ENCODE measurements at regions of chr17 and their contacts with region 1.

Region 1: DNA sequence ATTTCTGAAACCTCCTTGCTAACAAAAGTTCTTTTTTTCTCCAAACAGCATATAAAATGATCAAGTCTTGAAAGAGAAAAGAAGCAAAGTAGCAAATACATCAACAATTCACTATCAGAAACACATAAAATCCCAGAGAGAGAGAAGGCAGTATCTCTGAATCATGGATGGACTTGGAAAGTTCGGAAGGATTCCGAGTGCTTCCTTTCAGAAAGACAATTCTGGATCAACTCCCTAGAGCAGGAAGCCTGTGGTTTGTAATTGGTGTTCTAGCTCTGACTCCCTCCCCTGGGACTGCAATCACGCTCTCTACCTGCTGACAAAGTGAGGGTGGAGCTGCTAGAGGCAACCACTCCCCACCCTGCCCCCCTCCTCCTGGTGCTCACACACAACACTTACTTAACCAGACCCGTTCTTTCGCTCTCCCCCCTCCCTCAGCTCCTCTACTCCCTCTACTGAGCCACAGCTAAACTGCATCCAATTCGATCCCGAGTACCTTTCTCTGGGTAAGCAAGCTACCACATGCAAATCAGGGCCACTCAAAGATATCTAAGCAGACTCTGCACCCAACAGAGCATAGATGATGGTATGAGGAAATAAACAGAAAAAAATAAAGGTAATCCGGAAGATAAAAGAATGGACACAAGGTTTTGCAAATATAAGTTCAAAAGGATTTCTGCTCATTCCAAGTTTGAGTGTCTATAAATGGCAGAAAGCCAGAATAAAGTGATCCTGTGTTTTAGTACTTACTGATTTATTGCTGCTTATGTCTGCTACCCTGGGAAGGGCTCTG is at the start of gene RNF43:
- DNase-seq: peak; percentile 93
- ATAC-seq: peak; percentile 100
- H3K4me3 Mint-ChIP-seq: peak within 1 kb of the TSS; percentile 82
- H3K27ac Mint-ChIP-seq: peak within 1 kb of the TSS; percentile 92
- H3K4me1 Mint-ChIP-seq: peaks cover 28% of the 10 kb centered on the region
- H3K27me3 Mint-ChIP-seq: peaks cover 6% of the 10 kb centered on the region
- CTCF ChIP-seq: peak; percentile 56; the same call in 1 of the 2 replicates
- total RNA-seq, gene RNF43: 3.2 to 3.6 TPM (median 3.5 TPM) in 3 replicates

Region 2: DNA sequence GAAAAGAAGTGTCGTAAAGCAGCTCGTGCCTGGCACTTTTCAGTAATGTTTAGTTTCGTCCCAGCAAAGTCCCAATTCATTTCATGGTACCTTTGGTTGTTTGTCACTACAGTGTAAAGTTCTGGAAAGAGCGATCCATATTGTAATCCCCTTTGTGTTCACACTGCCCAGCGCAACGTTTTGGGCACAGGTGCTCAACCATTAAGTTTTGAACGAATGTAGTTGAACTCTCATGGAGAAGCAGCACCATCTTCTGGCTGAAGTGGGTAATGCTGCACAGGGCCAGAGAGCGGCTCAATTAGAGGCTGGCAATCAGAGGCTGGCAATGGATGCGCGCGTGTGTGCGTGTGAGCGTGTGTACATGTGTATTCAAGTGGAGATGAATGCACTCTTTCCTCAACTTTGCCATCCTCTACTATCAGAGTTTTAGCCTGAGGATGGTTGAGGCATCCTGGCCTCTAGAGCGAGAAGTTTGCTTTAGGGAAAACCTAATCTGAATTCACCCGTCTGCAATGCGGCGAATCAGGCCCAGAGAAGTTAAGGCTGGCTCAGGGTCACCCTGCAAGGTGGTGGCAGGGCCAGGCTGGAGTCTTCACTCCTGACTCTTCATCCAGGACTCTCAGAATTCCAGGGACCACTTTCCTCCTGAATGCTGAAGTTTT is 304.4 kb before region 1 on chr17:
- CTCF ChIA-PET with region 1: no interaction called
- POLR2A ChIA-PET with region 1: no interaction called
- DNase-seq: peak; percentile 92
- ATAC-seq: peak; percentile 86
- H3K4me3 Mint-ChIP-seq: no peak overlapping the region
- H3K27ac Mint-ChIP-seq: no peak overlapping the region
- H3K4me1 Mint-ChIP-seq: no peaks in the 10 kb centered on the region
- H3K27me3 Mint-ChIP-seq: peaks cover 14% of the 10 kb centered on the region
- CTCF ChIP-seq: peak; percentile 82

Region 3: DNA sequence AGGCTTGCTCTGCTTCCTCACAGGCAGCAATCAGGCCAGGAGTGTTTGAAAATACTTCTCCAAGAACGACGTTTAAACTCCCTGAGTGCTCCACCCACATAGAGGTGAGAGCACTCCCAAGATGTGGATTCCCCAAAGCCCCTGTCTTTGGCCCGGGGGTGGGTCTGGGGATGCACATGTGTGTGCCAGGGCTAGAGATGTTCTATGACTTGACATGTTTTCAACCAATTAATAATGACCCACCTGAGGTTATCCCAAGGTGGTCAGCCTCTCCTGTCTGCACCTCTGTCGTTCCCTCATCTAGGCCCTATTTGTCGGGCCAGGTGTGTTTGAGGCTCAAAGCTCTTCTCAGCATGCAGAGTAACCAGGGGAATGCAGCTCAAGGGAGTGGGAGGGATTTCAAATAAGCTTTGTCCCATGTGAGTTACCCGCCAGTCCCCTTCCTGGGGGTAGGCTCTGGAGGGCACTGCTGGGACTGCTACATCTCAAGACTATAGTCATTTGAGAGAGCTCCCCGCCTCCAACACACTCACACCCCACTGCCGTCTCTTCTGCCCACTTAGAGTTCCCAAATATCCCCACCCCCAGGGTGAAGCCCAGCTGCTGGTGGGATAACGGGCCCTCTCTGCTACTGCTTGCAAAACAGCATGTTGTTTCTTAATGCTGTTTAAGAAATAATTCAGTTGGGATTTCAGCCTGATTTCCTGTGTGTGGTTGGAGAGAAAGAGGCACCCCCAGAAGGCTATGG is 133.0 kb before region 1 on chr17:
- CTCF ChIA-PET with region 1: interaction called, 11 read pairs
- POLR2A ChIA-PET with region 1: interaction called, 5 read pairs
- DNase-seq: peak; percentile 51
- ATAC-seq: peak; percentile 97
- H3K4me3 Mint-ChIP-seq: no peak overlapping the region
- H3K27ac Mint-ChIP-seq: 0 out of 2 replicates have a peak overlapping the region, but pooled peaks have one; percentile 17
- H3K4me1 Mint-ChIP-seq: peaks cover 20% of the 10 kb centered on the region
- H3K27me3 Mint-ChIP-seq: peaks cover 4% of the 10 kb centered on the region
- CTCF ChIP-seq: no peak

Region 4: GRCh38 chr17:58329035-58329809 is 88.3 kb before region 1 on chr17:
- CTCF ChIA-PET with region 1: interaction called, 18 read pairs
- POLR2A ChIA-PET with region 1: interaction called, 8 read pairs
- DNase-seq: peak; percentile 61
- ATAC-seq: peak; percentile 48
- H3K4me3 Mint-ChIP-seq: peak overlapping the region; percentile 41
- H3K27ac Mint-ChIP-seq: peak overlapping the region; percentile 44
- H3K4me1 Mint-ChIP-seq: peaks cover 57% of the 10 kb centered on the region
- H3K27me3 Mint-ChIP-seq: peaks cover 11% of the 10 kb centered on the region
- CTCF ChIP-seq: 0 out of 2 replicates have a peak, but pooled peaks have one; percentile 16

Region 5: GRCh38 chr17:58352014-58352842 is 65.3 kb before region 1 on chr17 and contains the start of gene SUPT4H1:
- CTCF ChIA-PET with region 1: interaction called, 52 read pairs
- POLR2A ChIA-PET with region 1: interaction called, 29 read pairs
- DNase-seq: peak; percentile 89
- ATAC-seq: peak; percentile 88
- H3K4me3 Mint-ChIP-seq: peak within 1 kb of the TSS; percentile 100
- H3K27ac Mint-ChIP-seq: peak within 1 kb of the TSS; percentile 99
- H3K4me1 Mint-ChIP-seq: peaks cover 19% of the 10 kb centered on the region
- H3K27me3 Mint-ChIP-seq: no peaks in the 10 kb centered on the region; the same call in 1 of the 2 replicates
- CTCF ChIP-seq: no peak
- total RNA-seq, gene SUPT4H1: 85.5 to 91.1 TPM (median 89.3 TPM) in 3 replicates

Region 6: GRCh38 chr17:58369214-58370031 is 48.1 kb before region 1 on chr17:
- CTCF ChIA-PET with region 1: interaction called, 10 read pairs
- POLR2A ChIA-PET with region 1: no interaction called
- DNase-seq: no peak
- ATAC-seq: no peak
- H3K4me3 Mint-ChIP-seq: no peak overlapping the region
- H3K27ac Mint-ChIP-seq: no peak overlapping the region
- H3K4me1 Mint-ChIP-seq: peaks cover 3% of the 10 kb centered on the region; the same call in 1 of the 2 replicates
- H3K27me3 Mint-ChIP-seq: no peaks in the 10 kb centered on the region
- CTCF ChIP-seq: no peak

Region 7: GRCh38 chr17:58388302-58389168 is 29.0 kb before region 1 on chr17:
- CTCF ChIA-PET with region 1: interaction called, 14 read pairs
- POLR2A ChIA-PET with region 1: no interaction called
- DNase-seq: no peak
- ATAC-seq: peak; percentile 66
- H3K4me3 Mint-ChIP-seq: peak overlapping the region; percentile 30
- H3K27ac Mint-ChIP-seq: peak overlapping the region; percentile 1; the same call in 1 of the 2 replicates
- H3K4me1 Mint-ChIP-seq: peaks cover 48% of the 10 kb centered on the region
- H3K27me3 Mint-ChIP-seq: peaks cover 15% of the 10 kb centered on the region
- CTCF ChIP-seq: no peak

Measured in WTC11 (cell line).